Activated CD4-positive, alpha-beta memory T cell treated with anti-CD3 and anti-CD28 coated beads for 36 hours (primary cell): ENCODE measurements at regions of chr17 and their contacts with region 1.

Region 1: GRCh38 chr17:58303971-58304725 is 23.4 kb upstream of the MPO start:
- DNase-seq: peak; percentile 72
- H3K4me3 Mint-ChIP-seq: no peak overlapping the region
- H3K27ac Mint-ChIP-seq: no peak overlapping the region
- H3K4me1 Mint-ChIP-seq: peaks cover 5% of the 10 kb centered on the region
- H3K27me3 Mint-ChIP-seq: no peaks in the 10 kb centered on the region

Region 2: GRCh38 chr17:58066401-58066800 is 237.7 kb before region 1 on chr17:
- CTCF ChIA-PET with region 1: no interaction called
- POLR2A ChIA-PET with region 1: no interaction called
- intact Hi-C with region 1: no loop called
- DNase-seq: no peak
- H3K4me3 Mint-ChIP-seq: no peak overlapping the region
- H3K27ac Mint-ChIP-seq: no peak overlapping the region
- H3K4me1 Mint-ChIP-seq: no peaks in the 10 kb centered on the region
- H3K27me3 Mint-ChIP-seq: peaks cover 8% of the 10 kb centered on the region

Region 3: GRCh38 chr17:58267347-58268324 is 36.5 kb before region 1 on chr17:
- CTCF ChIA-PET with region 1: no interaction called
- POLR2A ChIA-PET with region 1: no interaction called
- intact Hi-C with region 1: no loop called
- DNase-seq: no peak
- H3K4me3 Mint-ChIP-seq: no peak overlapping the region
- H3K27ac Mint-ChIP-seq: no peak overlapping the region
- H3K4me1 Mint-ChIP-seq: no peaks in the 10 kb centered on the region
- H3K27me3 Mint-ChIP-seq: peaks cover 30% of the 10 kb centered on the region

Region 4: DNA sequence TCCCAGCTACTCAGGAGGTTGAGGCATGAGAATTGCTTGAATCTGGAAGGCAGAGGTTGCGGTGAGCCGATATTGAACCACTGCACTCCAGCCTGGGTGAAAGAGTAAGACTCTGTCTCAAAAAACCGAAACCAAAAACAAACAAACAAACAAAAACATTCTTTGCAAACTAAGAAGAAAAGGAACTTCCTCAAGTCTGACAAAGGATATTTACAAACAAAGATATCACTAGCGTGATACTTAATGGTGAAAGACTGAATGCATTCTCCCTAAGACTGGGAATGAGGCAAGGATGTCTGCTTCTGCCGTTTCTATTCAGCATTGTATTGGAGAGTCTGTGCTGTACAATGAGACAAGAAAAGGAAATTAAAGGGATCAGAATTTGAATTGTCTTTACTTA is 12.9 kb before region 1 on chr17:
- CTCF ChIA-PET with region 1: interaction called, 10 read pairs
- POLR2A ChIA-PET with region 1: no interaction called
- intact Hi-C with region 1: no loop called
- DNase-seq: no peak
- H3K4me3 Mint-ChIP-seq: no peak overlapping the region
- H3K27ac Mint-ChIP-seq: no peak overlapping the region
- H3K4me1 Mint-ChIP-seq: no peaks in the 10 kb centered on the region
- H3K27me3 Mint-ChIP-seq: peaks cover 3% of the 10 kb centered on the region

Region 5: DNA sequence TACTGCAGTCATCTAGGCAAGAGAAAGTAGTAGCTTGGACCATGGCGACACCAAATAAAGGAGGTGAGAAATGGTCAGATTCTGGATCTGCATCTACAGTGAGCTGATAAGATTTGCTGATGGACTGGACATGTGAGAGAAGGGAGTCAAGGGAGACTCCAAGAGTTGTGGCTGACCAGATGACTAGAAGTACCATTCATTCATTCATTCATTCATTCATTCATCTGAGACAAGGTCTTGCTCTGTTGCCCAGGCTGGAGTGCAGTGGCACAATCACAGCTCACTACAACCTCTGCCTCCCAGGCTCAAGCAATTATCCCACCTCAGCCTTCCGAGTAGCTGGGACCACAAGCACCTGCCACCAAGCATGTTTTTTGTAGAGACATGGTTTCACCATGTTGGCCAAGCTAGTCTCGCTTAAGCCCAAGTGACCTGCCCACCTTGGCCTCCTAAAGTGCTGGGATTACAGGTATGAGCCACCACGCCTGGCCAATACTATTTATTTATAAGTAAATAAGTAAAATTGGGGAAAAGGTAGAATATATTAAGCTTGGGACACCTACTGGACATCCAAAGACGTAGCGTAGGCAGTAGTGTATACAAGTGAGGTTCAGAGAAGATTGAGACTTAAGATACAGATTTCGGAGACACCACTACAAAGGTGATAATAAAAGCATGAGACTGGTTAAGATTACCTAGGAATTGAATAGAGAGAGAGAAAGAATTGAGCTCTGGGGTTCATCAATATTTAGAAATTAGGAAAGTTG is 128.8 kb after region 1 on chr17:
- CTCF ChIA-PET with region 1: interaction called, 10 read pairs
- POLR2A ChIA-PET with region 1: no interaction called
- intact Hi-C with region 1: no loop called
- DNase-seq: no peak
- H3K4me3 Mint-ChIP-seq: no peak overlapping the region
- H3K27ac Mint-ChIP-seq: no peak overlapping the region
- H3K4me1 Mint-ChIP-seq: no peaks in the 10 kb centered on the region
- H3K27me3 Mint-ChIP-seq: no peaks in the 10 kb centered on the region

Region 6: DNA sequence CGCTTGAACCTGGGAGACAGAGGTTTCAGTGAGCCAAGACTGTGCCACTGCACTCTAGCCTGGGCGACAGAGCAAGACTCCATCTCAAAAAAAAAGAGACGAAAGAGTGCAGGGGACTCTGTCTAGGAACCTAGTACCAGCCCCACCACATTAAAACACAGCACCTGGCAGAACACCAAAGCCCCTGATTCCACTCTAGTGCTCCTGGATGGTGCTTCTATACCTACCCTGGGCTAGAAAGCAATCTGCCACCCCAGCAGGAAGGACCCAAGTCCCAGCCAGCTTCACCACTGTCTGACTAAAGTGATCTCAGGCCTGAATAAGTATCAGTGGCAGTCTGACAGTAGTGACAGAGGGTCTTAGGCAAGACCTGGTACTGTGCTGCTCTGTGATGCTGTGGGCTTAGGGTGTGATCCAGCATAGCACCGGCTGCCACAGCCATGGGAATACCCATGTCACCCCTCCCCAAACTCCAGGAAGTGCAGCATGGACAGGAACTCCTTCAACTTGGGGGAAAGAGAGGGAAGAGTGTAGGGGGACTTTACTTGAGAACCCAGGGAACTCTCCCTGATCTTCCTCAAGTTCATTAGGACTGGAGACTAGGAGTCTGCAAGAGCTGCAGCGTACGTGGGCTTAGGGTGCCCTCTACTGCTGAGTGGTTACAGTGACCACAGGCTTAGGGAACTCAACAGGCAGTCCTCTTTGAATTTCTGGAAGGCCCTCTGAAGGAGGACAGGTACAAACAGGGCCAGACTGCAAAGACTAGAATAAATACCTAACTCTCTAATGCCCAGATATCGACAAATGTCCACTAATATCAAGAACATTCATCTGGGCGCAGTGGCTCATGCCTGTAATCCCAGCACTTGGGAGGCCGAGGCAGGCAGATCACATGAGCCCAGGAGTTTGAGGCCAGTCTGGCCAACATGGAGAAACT is 143.2 kb after region 1 on chr17:
- CTCF ChIA-PET with region 1: interaction called, 20 read pairs
- POLR2A ChIA-PET with region 1: no interaction called
- intact Hi-C with region 1: loop called (anchors 1 kb)
- DNase-seq: peak; percentile 83
- H3K4me3 Mint-ChIP-seq: no peak overlapping the region
- H3K27ac Mint-ChIP-seq: no peak overlapping the region
- H3K4me1 Mint-ChIP-seq: peaks cover 9% of the 10 kb centered on the region
- H3K27me3 Mint-ChIP-seq: no peaks in the 10 kb centered on the region

Region 7: DNA sequence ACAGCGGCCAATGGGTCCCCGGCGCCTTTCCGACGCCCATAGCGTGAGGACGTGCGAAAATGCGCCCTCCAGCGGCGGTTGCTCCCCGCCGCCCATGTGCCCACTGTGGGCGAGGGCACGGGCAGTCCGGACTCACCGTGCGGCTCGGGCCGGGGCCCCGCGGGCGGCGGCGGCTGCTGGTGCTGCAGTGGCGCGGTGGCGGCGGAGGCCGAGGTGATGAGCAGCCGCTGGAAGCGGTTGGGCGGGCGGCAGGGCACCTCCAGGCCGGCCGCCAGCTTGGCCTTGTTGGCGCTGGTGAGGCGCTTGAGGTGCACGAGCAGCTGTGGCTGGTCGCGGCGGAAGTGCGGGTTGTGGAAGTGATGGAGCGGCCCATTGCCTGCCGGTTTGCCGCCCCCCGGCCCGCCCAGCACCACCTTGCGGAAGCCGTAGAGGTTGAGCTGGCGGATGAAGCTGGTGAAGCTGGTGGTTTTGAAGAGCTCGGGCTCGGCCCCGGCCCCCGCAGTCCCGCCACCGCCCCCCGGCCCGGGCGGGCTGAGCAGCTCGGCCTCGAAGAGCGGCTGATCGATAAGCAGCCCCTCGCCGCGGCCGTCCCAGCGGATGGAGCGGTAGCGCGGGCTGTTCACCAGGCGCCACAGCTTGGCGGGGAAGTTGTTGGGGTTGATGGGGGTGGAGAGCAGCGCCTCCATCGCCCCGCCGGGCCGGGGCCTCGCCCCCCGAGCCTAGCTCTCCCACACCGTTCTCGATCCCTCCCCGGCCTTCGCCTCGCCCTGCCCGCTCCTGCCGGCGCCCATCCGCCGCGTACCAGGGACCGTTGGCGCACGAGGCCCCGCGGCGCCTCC is 183.7 kb after region 1 on chr17 and contains the start of gene HSF5:
- CTCF ChIA-PET with region 1: interaction called, 13 read pairs
- POLR2A ChIA-PET with region 1: no interaction called
- intact Hi-C with region 1: no loop called
- DNase-seq: peak; percentile 81
- H3K4me3 Mint-ChIP-seq: peak within 1 kb of the TSS; percentile 50
- H3K27ac Mint-ChIP-seq: peak within 1 kb of the TSS; percentile 28
- H3K4me1 Mint-ChIP-seq: peaks cover 15% of the 10 kb centered on the region
- H3K27me3 Mint-ChIP-seq: no peaks in the 10 kb centered on the region
- total RNA-seq, gene HSF5: 2.9 to 3.0 TPM

Region 8: GRCh38 chr17:58585377-58585944 is 281.3 kb after region 1 on chr17:
- CTCF ChIA-PET with region 1: no interaction called
- POLR2A ChIA-PET with region 1: no interaction called
- intact Hi-C with region 1: no loop called
- DNase-seq: no peak
- H3K4me3 Mint-ChIP-seq: no peak overlapping the region
- H3K27ac Mint-ChIP-seq: no peak overlapping the region
- H3K4me1 Mint-ChIP-seq: no peaks in the 10 kb centered on the region
- H3K27me3 Mint-ChIP-seq: no peaks in the 10 kb centered on the region